Pancreas (tissue), 10 donors: ENCODE measurements at regions of chr7 and their contacts with region 1.

Region 1: GRCh38 chr7:21507626-21508343 is 35.1 kb upstream of the DNAH11 start:
- DNase-seq: peak in 3 of 6 donors; percentile 21 to 60 (median 29)
- ATAC-seq: peak; percentile 60 to 88 (median 84)
- H3K4me3 ChIP-seq: no peak overlapping the region
- H3K27ac ChIP-seq: no peak overlapping the region
- H3K4me1 ChIP-seq: no peaks in the 10 kb centered on the region
- H3K27me3 ChIP-seq: no peaks in the 10 kb centered on the region
- CTCF ChIP-seq: peak; percentile 40 to 58 (median 54)

Region 2: GRCh38 chr7:21261627-21262594 is 245.9 kb before region 1 on chr7:
- intact Hi-C with region 1: loop called in 1 of 3 experiments (anchors 10 kb)
- DNase-seq: peak in 3 of 6 donors; percentile 7 to 24 (median 15)
- ATAC-seq: peak in 3 of 4 donors; percentile 63 to 72 (median 68)
- H3K4me3 ChIP-seq: no peak overlapping the region
- H3K27ac ChIP-seq: no peak overlapping the region
- H3K4me1 ChIP-seq: no peaks in the 10 kb centered on the region
- H3K27me3 ChIP-seq: peaks cover 0 to 8% (median 2%) of the 10 kb centered on the region in 4 donors
- CTCF ChIP-seq: peak in 2 of 4 donors; percentile 24 to 28

Region 3: GRCh38 chr7:21596801-21597200 is 89.0 kb after region 1 on chr7:
- intact Hi-C with region 1: no loop called
- DNase-seq: no peak
- ATAC-seq: no peak
- H3K4me3 ChIP-seq: no peak overlapping the region
- H3K27ac ChIP-seq: no peak overlapping the region
- H3K4me1 ChIP-seq: no peaks in the 10 kb centered on the region
- H3K27me3 ChIP-seq: no peaks in the 10 kb centered on the region
- CTCF ChIP-seq: no peak

Region 4: GRCh38 chr7:22103255-22103969 is 595.6 kb after region 1 on chr7:
- intact Hi-C with region 1: no loop called
- DNase-seq: peak in 4 of 6 donors; percentile 34 to 60 (median 43)
- ATAC-seq: peak; percentile 66 to 87 (median 82)
- H3K4me3 ChIP-seq: no peak overlapping the region
- H3K27ac ChIP-seq: no peak overlapping the region
- H3K4me1 ChIP-seq: no peaks in the 10 kb centered on the region
- H3K27me3 ChIP-seq: no peaks in the 10 kb centered on the region
- CTCF ChIP-seq: peak; percentile 14 to 59 (median 48)